ENCODE measurements at regions of chr7 and their contacts with region 1.

Region 1: DNA sequence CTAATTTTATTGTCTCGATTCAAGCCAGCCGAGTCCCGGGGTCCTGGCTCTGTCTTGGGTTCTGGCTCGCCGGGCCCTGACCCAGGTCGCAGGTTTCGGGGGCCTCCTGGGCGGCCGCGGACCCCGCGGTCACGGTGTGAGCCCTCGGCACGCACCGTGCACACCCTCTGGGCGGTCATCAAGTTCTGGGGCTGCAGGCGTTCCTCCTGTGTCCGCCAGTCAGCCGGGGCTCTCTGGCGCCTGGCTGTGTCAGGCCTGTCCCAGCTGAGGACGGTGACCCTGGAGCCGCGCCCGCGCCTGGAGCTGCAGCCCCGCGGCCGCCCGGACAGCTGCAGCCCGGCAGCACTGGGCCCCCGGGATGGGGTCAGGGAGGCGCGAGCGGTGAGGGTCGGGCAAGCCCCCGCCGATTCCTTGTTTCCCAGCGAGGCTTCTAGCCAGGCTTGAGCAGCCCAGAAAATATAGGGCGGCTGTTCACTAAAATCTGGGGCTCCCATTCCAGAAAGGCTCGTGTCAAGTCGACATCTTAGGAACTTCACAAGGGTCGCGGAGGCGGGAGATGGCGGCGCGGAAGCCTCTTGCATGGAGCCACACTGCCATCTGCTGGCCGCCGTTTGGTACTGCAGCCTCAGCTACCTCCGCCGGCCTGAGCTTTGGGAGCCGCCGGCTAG is 4.2 kb upstream of the HOXA7 start:
- DNase-seq: peak; percentile 91
- ATAC-seq: peak; percentile 84
- H3K4me3 ChIP-seq: peak overlapping the region; percentile 24 to 76 (median 62)
- H3K4me3 Mint-ChIP-seq: peak overlapping the region; percentile 86
- H3K27ac ChIP-seq: no peak overlapping the region
- H3K27ac Mint-ChIP-seq: peak overlapping the region; percentile 67
- H3K4me1 ChIP-seq: peaks cover 49 to 57% of the 10 kb centered on the region in 2 donors
- H3K4me1 Mint-ChIP-seq: peaks cover 38% of the 10 kb centered on the region
- H3K27me3 ChIP-seq: peaks cover 1 to 88% (median 75%) of the 10 kb centered on the region in 4 experiments
- H3K27me3 Mint-ChIP-seq: peaks cover 70% of the 10 kb centered on the region
- CTCF ChIP-seq: peak; percentile 100

Region 2: GRCh38 chr7:25862260-25863037 is 1298.2 kb before region 1 on chr7:
- CTCF ChIA-PET with region 1: interaction called, 10 read pairs
- POLR2A ChIA-PET with region 1: no interaction called
- intact Hi-C with region 1: loop called (anchors 2 kb)
- DNase-seq: peak; percentile 71
- ATAC-seq: peak; percentile 72
- H3K4me3 ChIP-seq: peak overlapping the region in 1 of 5 experiments; percentile 16
- H3K4me3 Mint-ChIP-seq: peak overlapping the region; percentile 47
- H3K27ac ChIP-seq: no peak overlapping the region
- H3K27ac Mint-ChIP-seq: peak overlapping the region; percentile 70
- H3K4me1 ChIP-seq: peaks cover 12 to 40% of the 10 kb centered on the region in 2 donors
- H3K4me1 Mint-ChIP-seq: peaks cover 3% of the 10 kb centered on the region
- H3K27me3 ChIP-seq: peaks cover 5 to 94% (median 79%) of the 10 kb centered on the region in 4 experiments
- H3K27me3 Mint-ChIP-seq: peaks cover 50% of the 10 kb centered on the region
- CTCF ChIP-seq: no peak

Region 3: DNA sequence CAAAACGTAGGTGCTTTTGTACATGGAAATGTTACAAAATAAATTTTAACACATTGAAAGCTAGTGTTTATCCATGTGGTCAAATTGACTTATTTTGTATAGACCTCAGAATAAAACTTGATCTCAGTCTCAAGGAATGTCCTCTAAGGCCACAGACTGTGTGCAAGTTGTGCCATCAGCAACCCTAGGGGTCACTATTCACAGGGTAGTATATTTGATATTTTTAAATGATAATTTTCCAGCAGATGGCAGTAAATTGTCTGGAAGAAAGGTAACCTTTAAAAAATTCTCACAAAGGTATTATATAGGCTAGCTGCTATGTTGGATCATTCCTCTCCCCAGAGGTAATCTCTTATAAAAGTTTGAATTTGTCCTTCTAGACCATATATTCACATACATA is 881.9 kb before region 1 on chr7:
- CTCF ChIA-PET with region 1: no interaction called
- POLR2A ChIA-PET with region 1: no interaction called
- intact Hi-C with region 1: loop called (anchors 10 kb)
- DNase-seq: peak; percentile 66
- ATAC-seq: peak; percentile 64
- H3K4me3 ChIP-seq: no peak overlapping the region
- H3K4me3 Mint-ChIP-seq: no peak overlapping the region
- H3K27ac ChIP-seq: no peak overlapping the region
- H3K27ac Mint-ChIP-seq: no peak overlapping the region
- H3K4me1 ChIP-seq: peaks cover 0 to 3% of the 10 kb centered on the region in 2 donors
- H3K4me1 Mint-ChIP-seq: peaks cover 9% of the 10 kb centered on the region
- H3K27me3 ChIP-seq: no peaks in the 10 kb centered on the region
- H3K27me3 Mint-ChIP-seq: no peaks in the 10 kb centered on the region
- CTCF ChIP-seq: peak; percentile 64

Region 4: DNA sequence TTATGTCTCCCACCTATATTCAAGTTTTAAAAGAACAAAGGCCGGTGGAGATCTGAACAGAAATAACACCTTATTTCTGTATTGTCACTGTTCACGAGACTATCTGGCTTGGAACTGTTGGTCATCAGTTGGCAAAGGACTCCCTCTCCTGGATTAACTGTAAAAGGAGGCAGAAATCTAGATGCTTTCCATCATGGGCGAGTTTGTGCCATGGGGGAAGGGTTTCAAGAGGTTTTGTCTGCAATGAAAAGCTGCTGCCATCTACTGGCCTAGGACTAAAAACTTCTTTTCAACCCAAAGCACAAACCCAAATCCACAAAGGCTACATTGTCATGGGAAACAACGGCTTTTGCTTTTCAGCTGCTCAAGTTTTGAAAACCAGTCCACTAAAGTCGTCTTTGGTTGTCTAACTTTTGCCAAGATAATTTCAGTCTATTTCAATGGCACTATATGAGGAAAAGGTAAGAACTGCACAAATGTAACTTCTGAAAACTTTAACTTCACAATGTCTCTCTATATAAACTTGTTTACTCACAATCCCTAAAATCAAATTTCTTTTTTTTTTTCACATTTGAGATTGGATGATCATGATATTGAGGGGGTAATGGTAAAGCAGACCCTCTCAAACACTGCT is 493.1 kb before region 1 on chr7:
- CTCF ChIA-PET with region 1: interaction called, 14 read pairs
- POLR2A ChIA-PET with region 1: no interaction called
- intact Hi-C with region 1: no loop called
- DNase-seq: peak; percentile 75
- ATAC-seq: peak; percentile 66
- H3K4me3 ChIP-seq: no peak overlapping the region
- H3K4me3 Mint-ChIP-seq: no peak overlapping the region
- H3K27ac ChIP-seq: no peak overlapping the region
- H3K27ac Mint-ChIP-seq: no peak overlapping the region
- H3K4me1 ChIP-seq: peaks cover 0 to 6% of the 10 kb centered on the region in 2 donors
- H3K4me1 Mint-ChIP-seq: peaks cover 18% of the 10 kb centered on the region
- H3K27me3 ChIP-seq: no peaks in the 10 kb centered on the region
- H3K27me3 Mint-ChIP-seq: no peaks in the 10 kb centered on the region
- CTCF ChIP-seq: peak; percentile 77

Region 5: DNA sequence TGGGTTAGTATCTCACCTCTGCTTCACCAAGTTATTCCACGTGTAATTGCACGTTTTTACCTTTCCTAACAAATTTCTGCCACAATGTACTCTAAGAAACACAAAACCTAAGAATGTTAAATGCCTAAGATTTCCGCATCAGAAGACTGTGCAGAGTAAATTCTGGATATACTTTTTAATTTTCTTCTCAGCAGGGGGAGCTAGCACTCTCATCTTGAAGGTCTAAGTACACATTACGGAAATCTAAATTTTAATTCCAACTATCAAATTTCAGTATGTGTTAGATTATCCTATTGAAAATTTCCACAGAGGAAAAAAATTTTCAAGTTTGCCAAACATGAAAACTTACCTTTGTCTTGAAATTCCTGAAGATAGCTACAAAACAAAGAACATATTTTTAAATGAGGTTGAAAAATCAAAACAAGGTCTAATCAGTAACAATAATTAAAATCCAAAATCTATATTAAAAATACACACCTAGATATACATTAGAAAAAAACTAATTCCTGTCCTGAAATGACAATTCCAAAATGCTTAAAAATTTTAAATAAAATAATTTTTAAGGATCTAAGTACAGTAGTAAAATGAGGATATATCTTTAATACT is 306.8 kb before region 1 on chr7:
- CTCF ChIA-PET with region 1: interaction called, 16 read pairs
- POLR2A ChIA-PET with region 1: no interaction called
- intact Hi-C with region 1: loop called (anchors 1 kb)
- DNase-seq: peak; percentile 62
- ATAC-seq: no peak
- H3K4me3 ChIP-seq: no peak overlapping the region
- H3K4me3 Mint-ChIP-seq: no peak overlapping the region
- H3K27ac ChIP-seq: no peak overlapping the region
- H3K27ac Mint-ChIP-seq: no peak overlapping the region
- H3K4me1 ChIP-seq: peaks cover 21 to 23% of the 10 kb centered on the region in 2 donors
- H3K4me1 Mint-ChIP-seq: peaks cover 26% of the 10 kb centered on the region
- H3K27me3 ChIP-seq: no peaks in the 10 kb centered on the region
- H3K27me3 Mint-ChIP-seq: no peaks in the 10 kb centered on the region
- CTCF ChIP-seq: peak; percentile 74

Region 6: GRCh38 chr7:27242555-27243339 is 82.1 kb after region 1 on chr7 and contains the start of gene EVX1:
- CTCF ChIA-PET with region 1: interaction called, 4 read pairs
- POLR2A ChIA-PET with region 1: no interaction called
- intact Hi-C with region 1: loop called (anchors 2 kb)
- DNase-seq: peak; percentile 58
- ATAC-seq: no peak
- H3K4me3 ChIP-seq: no peak within 1 kb of the TSS
- H3K4me3 Mint-ChIP-seq: peak within 1 kb of the TSS; percentile 41
- H3K27ac ChIP-seq: no peak within 1 kb of the TSS
- H3K27ac Mint-ChIP-seq: peak within 1 kb of the TSS; percentile 22
- H3K4me1 ChIP-seq: peaks cover 29 to 60% of the 10 kb centered on the region in 2 donors
- H3K4me1 Mint-ChIP-seq: peaks cover 23% of the 10 kb centered on the region
- H3K27me3 ChIP-seq: peaks cover 0 to 97% (median 72%) of the 10 kb centered on the region in 4 experiments
- H3K27me3 Mint-ChIP-seq: peaks cover 72% of the 10 kb centered on the region
- CTCF ChIP-seq: no peak
- total RNA-seq, gene EVX1: not detected in 2 replicates